Heart left ventricle (tissue), 16 donors: ENCODE measurements at regions of chr2 and their contacts with region 1.

Region 1: GRCh38 chr2:67846370-67847070 is 216.3 kb downstream of the C1D start:
- DNase-seq: peak; percentile 62 to 81 (median 71)
- ATAC-seq: peak; percentile 52 to 94 (median 84)
- H3K4me3 ChIP-seq: peak overlapping the region in 5 of 12 donors; percentile 11 to 38 (median 23)
- H3K27ac ChIP-seq: peak overlapping the region in 2 of 12 donors; percentile 27 to 52
- H3K4me1 ChIP-seq: peaks cover 0 to 16% (median 0%) of the 10 kb centered on the region in 12 donors
- H3K27me3 ChIP-seq: no peaks in the 10 kb centered on the region
- CTCF ChIP-seq: peak; percentile 66 to 85 (median 77)
- POLR2A ChIP-seq: no peak

Region 2: GRCh38 chr2:68031542-68032160 is 185.1 kb after region 1 on chr2:
- intact Hi-C with region 1: loop called in 3 of 10 experiments (anchors 5 kb)
- DNase-seq: no peak
- ATAC-seq: no peak
- H3K4me3 ChIP-seq: no peak overlapping the region
- H3K27ac ChIP-seq: no peak overlapping the region
- H3K4me1 ChIP-seq: no peaks in the 10 kb centered on the region
- H3K27me3 ChIP-seq: no peaks in the 10 kb centered on the region
- CTCF ChIP-seq: peak; percentile 38 to 80 (median 66)
- POLR2A ChIP-seq: no peak

Region 3: DNA sequence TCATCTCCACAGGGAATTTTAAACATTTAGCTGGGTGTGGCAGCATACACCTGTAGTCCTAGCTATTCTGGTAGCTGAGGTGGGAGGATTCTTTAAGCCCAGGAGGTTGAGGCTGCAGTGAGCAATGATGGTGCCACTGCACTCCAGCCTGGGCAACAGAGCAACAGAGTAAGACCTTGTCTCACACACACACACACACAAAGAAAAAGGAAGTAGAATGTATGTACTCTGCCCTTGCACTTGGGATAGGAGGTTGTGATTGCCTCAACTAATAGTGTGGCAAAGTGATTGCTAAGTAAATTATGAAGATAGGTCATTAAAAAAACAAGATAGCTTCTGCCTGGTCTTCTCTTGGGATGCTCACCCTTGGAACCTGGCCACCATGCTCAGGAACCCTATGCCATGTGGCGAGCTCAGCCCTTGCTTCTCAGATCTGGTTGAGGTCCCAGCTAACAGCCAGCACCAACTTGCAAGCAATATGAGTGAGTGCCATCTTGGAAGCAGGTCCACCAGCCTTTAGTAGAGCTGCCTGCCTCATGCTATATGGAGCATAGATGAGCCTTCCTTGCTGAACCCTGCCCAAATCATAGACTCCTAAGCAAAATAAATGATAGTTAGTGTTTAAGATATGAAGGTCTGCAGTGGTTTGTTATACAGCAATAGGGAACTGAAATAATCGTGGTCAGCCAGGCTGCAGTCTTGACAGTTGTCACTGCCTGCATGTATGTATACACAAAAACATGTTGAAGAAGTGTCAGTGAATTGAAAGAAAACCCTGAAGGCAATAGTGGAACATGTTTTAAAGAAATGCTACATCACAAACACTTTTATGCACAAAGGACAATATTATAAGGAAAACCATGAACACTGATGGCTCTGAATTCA is 281.1 kb after region 1 on chr2:
- intact Hi-C with region 1: no loop called
- DNase-seq: no peak
- ATAC-seq: no peak
- H3K4me3 ChIP-seq: no peak overlapping the region
- H3K27ac ChIP-seq: no peak overlapping the region
- H3K4me1 ChIP-seq: peaks cover 0 to 3% (median under 1%) of the 10 kb centered on the region in 12 donors
- H3K27me3 ChIP-seq: no peaks in the 10 kb centered on the region
- CTCF ChIP-seq: no peak
- POLR2A ChIP-seq: no peak